ENCODE measurements at regions of chr3 and their contacts with region 1.

Region 1: GRCh38 chr3:107421170-107421792 is 44.0 kb downstream of the CCDC54 start:
- DNase-seq: no peak
- H3K4me3 ChIP-seq: peak overlapping the region in 3 of 4 donors; percentile 18 to 22 (median 19)
- H3K27ac ChIP-seq: no peak overlapping the region
- H3K4me1 ChIP-seq: no peaks in the 10 kb centered on the region
- H3K27me3 ChIP-seq: no peaks in the 10 kb centered on the region
- CTCF ChIP-seq: peak; percentile 38 to 81 (median 52)
- EP300 ChIP-seq: no peak
- POLR2A ChIP-seq: no peak

Region 2: DNA sequence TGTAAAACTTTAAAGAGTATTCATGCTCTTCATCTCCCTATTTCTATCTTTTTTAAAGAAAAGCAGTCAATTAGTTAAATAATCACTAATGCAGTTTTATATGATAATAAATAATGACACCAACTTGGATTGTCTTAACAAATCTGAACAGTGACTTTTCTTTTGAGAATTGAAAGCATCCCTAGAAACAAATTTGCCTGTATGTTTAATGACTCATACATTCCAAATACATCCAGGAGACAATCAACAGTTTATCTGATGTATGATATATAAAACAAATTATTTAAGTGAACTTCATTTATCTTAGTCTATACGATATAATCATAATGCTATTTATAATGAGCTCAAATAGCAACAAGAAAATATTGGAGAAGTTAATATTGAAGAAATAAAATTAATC is 1976.6 kb before region 1 on chr3:
- intact Hi-C with region 1: no loop called
- DNase-seq: no peak
- H3K4me3 ChIP-seq: no peak overlapping the region
- H3K27ac ChIP-seq: no peak overlapping the region
- H3K4me1 ChIP-seq: peaks cover 0 to 8% (median 0%) of the 10 kb centered on the region in 4 donors
- H3K27me3 ChIP-seq: no peaks in the 10 kb centered on the region
- CTCF ChIP-seq: no peak
- EP300 ChIP-seq: no peak
- POLR2A ChIP-seq: no peak

Region 3: GRCh38 chr3:107271787-107272387 is 149.4 kb before region 1 on chr3:
- intact Hi-C with region 1: loop called (anchors 2 kb)
- DNase-seq: no peak
- H3K4me3 ChIP-seq: no peak overlapping the region
- H3K27ac ChIP-seq: no peak overlapping the region
- H3K4me1 ChIP-seq: no peaks in the 10 kb centered on the region
- H3K27me3 ChIP-seq: no peaks in the 10 kb centered on the region
- CTCF ChIP-seq: peak; percentile 35 to 67 (median 57)
- EP300 ChIP-seq: no peak
- POLR2A ChIP-seq: no peak

Measured in sigmoid colon (tissue), 7 donors.